HEK293 (cell line): ENCODE measurements at regions of chr12 and their contacts with region 1.

Region 1: DNA sequence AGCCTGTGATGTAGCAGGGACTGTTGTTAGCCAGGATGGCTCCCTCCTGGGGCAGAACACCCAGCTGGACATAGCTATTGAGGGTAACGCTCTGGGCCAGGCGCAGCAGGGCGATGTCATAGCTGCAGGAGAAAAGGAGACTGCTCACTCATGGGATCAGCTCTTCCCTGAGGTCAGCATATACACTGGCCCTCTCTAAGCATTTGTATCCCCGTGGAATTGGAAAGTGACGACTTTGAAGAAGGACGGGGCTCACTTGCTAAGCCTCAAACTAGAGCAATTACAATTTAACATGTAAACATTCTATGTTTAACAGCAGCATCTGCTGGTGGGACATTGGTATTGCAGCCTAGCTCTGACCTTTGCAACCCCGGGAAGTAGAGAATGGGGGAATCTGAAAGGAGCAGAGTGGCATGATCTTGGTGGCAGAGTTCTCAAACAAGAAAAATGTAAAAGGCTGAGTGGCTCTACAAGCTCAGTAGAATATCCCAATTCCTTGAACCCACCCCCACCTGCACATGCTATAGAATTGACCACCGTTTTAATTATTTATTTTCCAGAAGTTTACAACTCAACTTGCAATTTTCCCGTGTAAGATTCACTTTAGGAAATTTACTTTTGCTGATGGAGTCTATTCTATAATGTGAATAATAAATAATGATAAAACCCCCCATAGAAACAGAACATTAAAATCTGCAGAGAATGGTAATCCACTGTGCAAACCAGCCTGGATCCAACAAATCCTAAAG is 5.0 kb downstream of the CELA1 start:
- H3K4me3 ChIP-seq: no peak overlapping the region
- H3K27ac ChIP-seq: no peak overlapping the region
- H3K4me1 ChIP-seq: no peaks in the 10 kb centered on the region
- CTCF ChIP-seq: peak; percentile 81

Region 2: GRCh38 chr12:50715174-50715573 is 626.3 kb before region 1 on chr12:
- CTCF ChIA-PET with region 1: no interaction called
- POLR2A ChIA-PET with region 1: no interaction called
- H3K4me3 ChIP-seq: no peak overlapping the region
- H3K27ac ChIP-seq: no peak overlapping the region
- H3K4me1 ChIP-seq: no peaks in the 10 kb centered on the region
- CTCF ChIP-seq: no peak

Region 3: GRCh38 chr12:50825372-50825838 is 516.0 kb before region 1 on chr12:
- CTCF ChIA-PET with region 1: interaction called, 26 read pairs
- POLR2A ChIA-PET with region 1: interaction called, 5 read pairs
- H3K4me3 ChIP-seq: no peak overlapping the region
- H3K27ac ChIP-seq: no peak overlapping the region
- H3K4me1 ChIP-seq: no peaks in the 10 kb centered on the region
- CTCF ChIP-seq: peak; percentile 60; the same call in 1 of the 2 replicates

Region 4: GRCh38 chr12:51047655-51048540 is 293.5 kb before region 1 on chr12 and contains the start of gene LETMD1:
- CTCF ChIA-PET with region 1: interaction called, 12 read pairs
- POLR2A ChIA-PET with region 1: no interaction called
- H3K4me3 ChIP-seq: peak within 1 kb of the TSS; percentile 80
- H3K27ac ChIP-seq: peak within 1 kb of the TSS; percentile 65
- H3K4me1 ChIP-seq: 0 out of 2 replicates have a peak, but pooled peaks cover 3% of the 10 kb centered on the region
- CTCF ChIP-seq: peak; percentile 96

Region 5: GRCh38 chr12:51253276-51253675 is 88.2 kb before region 1 on chr12:
- CTCF ChIA-PET with region 1: interaction called, 11 read pairs
- POLR2A ChIA-PET with region 1: no interaction called
- H3K4me3 ChIP-seq: no peak overlapping the region
- H3K27ac ChIP-seq: no peak overlapping the region
- H3K4me1 ChIP-seq: no peaks in the 10 kb centered on the region
- CTCF ChIP-seq: no peak

Region 6: DNA sequence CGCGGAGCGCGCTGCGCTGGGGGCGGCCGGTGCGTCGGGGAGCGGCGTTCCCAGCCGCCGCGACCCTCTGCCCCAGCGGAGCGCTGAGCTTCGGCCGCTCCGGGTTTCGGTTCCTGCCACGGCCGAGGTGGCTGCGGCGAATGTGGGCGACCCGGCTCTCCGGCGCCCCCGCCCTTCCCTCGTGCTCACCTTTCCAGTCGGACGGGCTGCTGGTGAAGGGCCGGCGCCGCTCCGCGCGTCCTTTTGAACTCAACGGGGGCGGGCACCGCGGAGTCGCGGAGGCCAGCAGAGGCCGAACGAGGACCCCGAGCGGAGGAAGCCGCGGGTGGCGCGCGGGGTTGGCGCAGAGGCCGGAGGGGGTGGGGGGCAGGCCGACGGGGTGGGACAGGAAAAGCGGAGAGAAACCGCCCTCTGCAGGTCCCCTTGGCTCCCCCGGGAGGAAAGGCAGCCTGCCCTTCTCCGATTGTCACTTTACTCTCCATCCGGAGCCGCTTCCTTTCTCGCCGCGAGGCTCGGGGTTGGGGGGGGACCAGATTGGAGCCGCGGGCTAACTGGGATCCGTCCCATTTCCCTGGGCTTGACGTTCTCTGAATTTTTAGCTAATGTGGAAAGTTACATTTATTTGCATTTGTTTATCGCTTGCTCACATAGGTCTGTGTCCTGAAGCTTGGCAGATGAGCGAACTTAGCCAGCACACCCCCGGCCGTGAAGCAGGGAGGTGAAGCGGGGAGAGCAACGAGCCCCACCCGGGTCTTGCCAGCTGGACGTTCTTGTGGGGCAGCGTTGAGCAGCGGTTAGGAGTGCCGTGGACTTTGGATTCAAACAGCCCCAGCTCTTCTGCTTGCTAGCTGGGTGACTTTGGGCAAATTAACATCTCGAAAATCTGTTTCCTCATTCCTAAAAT is 71.1 kb before region 1 on chr12 and contains the start of gene SMAGP:
- CTCF ChIA-PET with region 1: interaction called, 10 read pairs
- POLR2A ChIA-PET with region 1: no interaction called
- H3K4me3 ChIP-seq: peak within 1 kb of the TSS; percentile 68
- H3K27ac ChIP-seq: peak within 1 kb of the TSS; percentile 50; the same call in 1 of the 2 replicates
- H3K4me1 ChIP-seq: no peaks in the 10 kb centered on the region
- CTCF ChIP-seq: peak; percentile 69

Region 7: DNA sequence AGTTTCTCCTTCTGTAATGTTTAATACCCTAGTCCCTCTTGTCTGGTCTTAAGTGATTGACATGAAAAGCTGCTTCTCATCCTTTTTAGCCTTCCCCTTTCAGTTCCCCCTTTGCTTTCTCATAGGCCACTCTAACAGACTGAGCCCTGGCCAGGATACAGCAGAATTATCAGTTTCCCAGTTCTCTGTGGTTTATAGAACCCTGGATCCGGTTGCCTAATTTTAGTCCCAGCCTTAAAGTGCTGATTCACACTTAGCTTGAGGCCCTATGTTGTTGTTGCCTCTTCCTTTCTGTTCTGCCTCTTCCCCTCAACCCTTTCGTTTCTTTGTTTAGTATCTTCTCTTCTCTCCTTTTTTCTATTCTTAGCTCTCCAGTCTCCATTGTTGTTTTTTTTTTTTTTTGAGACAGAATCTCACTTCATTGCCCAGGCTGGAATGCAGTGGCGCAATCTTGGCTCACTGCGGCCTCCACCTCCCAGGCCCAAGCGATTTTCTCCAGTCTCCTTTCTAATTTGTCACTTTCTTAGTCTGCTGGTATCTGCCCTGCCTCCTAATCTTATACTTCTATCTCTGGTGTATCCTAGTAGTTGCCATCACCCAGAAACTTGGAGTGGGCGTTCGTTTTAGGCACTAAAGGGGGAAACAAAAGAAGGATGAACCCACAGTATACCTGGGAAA is 14.5 kb before region 1 on chr12:
- CTCF ChIA-PET with region 1: interaction called, 14 read pairs
- POLR2A ChIA-PET with region 1: interaction called, 5 read pairs
- H3K4me3 ChIP-seq: no peak overlapping the region
- H3K27ac ChIP-seq: no peak overlapping the region
- H3K4me1 ChIP-seq: no peaks in the 10 kb centered on the region
- CTCF ChIP-seq: no peak

Region 8: GRCh38 chr12:51351913-51352532 is 10.6 kb after region 1 on chr12:
- CTCF ChIA-PET with region 1: interaction called, 40 read pairs
- POLR2A ChIA-PET with region 1: no interaction called
- H3K4me3 ChIP-seq: no peak overlapping the region
- H3K27ac ChIP-seq: no peak overlapping the region
- H3K4me1 ChIP-seq: no peaks in the 10 kb centered on the region; the same call in 1 of the 2 replicates
- CTCF ChIP-seq: peak; percentile 70; the same call in 1 of the 2 replicates

Region 9: GRCh38 chr12:51409846-51410245 is 68.4 kb after region 1 on chr12:
- CTCF ChIA-PET with region 1: no interaction called
- POLR2A ChIA-PET with region 1: no interaction called
- H3K4me3 ChIP-seq: no peak overlapping the region
- H3K27ac ChIP-seq: no peak overlapping the region
- H3K4me1 ChIP-seq: peaks cover 7% of the 10 kb centered on the region
- CTCF ChIP-seq: no peak